ENCODE measurements at regions of chr10 and their contacts with region 1.

Region 1: GRCh38 chr10:96513698-96514561 is at the start of gene TLL2:
- DNase-seq: peak; percentile 79 to 89
- H3K4me3 ChIP-seq: peak within 1 kb of the TSS; percentile 48 to 59
- H3K27ac ChIP-seq: peak within 1 kb of the TSS in 1 of 2 donors; percentile 34
- H3K4me1 ChIP-seq: peaks cover 4 to 26% (median 19%) of the 10 kb centered on the region in 4 donors
- H3K27me3 ChIP-seq: peaks cover 0 to 9% of the 10 kb centered on the region in 2 donors
- CTCF ChIP-seq: peak; percentile 57 to 73

Region 2: GRCh38 chr10:96395931-96396877 is 117.7 kb before region 1 on chr10:
- intact Hi-C with region 1: loop called (anchors 10 kb)
- DNase-seq: peak; percentile 57 to 75
- H3K4me3 ChIP-seq: no peak overlapping the region
- H3K27ac ChIP-seq: no peak overlapping the region
- H3K4me1 ChIP-seq: peaks cover 0 to 8% (median 0%) of the 10 kb centered on the region in 4 donors
- H3K27me3 ChIP-seq: peaks cover 0 to 43% of the 10 kb centered on the region in 2 donors
- CTCF ChIP-seq: peak; percentile 73 to 76

Region 3: DNA sequence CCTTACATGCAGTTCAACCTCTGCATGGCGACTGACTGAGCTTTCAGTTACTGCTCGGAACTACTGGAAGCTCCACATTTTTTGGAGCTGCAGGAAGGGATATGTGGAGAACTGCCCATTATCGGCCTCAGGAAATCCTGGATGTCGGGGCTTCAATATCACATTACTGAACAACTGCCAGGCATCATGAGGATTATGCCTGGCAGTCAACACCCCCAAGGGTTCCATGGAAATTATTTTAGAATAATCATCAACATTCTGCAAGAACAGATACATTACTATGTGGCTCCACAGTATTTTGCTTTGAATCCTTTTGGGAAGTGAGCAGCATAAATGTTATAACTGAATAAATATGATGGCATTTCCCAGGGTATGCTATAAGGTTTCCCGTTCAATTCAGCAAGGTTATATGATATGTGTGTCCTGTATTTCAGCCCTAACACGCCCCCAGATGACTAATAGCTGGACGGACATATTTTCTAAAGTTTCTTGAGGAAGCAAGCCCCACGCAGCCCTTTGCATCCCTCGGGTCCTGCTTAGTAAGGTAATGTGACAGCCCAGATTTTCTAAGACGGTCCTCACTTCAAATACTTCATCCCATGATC is 102.1 kb before region 1 on chr10:
- intact Hi-C with region 1: no loop called
- DNase-seq: peak in 1 of 2 donors; percentile 9
- H3K4me3 ChIP-seq: no peak overlapping the region
- H3K27ac ChIP-seq: no peak overlapping the region
- H3K4me1 ChIP-seq: peaks cover 0 to 11% (median 4%) of the 10 kb centered on the region in 4 donors
- H3K27me3 ChIP-seq: peaks cover 0 to 41% of the 10 kb centered on the region in 2 donors
- CTCF ChIP-seq: no peak

Region 4: DNA sequence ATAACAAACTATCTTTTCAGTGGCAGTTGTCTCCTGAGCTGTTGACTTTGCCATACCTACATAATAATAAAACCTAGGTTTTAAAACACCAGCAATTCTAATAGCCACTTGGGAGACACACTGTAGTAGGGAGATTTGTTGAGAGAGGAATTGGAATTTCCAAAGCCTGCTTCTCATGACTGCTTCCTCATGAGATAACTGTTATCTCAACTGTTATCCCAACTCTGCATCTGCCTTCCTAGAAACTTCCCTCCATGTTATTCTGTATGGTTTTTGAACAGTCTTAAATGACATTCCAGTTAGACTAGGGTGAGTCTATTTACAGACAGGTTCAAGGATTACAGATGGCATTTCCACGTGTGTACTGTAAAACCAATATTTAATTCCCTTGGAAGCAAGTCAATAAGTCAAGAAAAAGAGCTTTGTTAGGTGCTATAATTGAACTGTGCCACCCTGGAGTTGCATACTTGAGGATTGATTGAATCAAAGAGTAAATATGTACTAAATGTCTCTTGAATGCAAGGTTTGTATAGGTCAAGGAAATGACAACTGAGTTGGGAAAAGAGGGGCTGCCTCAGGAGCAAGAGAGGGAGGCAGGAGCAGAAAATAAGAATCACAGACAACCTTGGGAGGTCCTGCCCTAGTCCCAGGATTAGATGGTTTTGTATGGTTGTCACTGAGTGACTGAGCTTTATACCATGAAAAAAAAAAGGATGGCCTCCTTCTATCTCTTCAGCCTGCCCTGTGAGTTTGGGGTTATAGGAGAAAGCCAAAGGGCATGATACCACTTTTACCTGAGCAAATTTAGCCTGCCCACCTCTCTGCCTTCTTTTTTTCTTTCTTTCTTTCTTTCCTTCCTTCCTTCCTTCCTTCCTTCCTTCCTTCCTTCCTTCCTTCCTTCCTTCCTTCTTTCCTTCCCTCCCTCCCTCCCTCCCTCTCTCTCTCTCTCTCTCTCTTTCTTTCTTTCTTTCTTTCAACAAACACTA is 82.8 kb after region 1 on chr10:
- intact Hi-C with region 1: no loop called
- DNase-seq: no peak
- H3K4me3 ChIP-seq: no peak overlapping the region
- H3K27ac ChIP-seq: no peak overlapping the region
- H3K4me1 ChIP-seq: no peaks in the 10 kb centered on the region
- H3K27me3 ChIP-seq: peaks cover 0 to 6% of the 10 kb centered on the region in 2 donors
- CTCF ChIP-seq: no peak

Region 5: DNA sequence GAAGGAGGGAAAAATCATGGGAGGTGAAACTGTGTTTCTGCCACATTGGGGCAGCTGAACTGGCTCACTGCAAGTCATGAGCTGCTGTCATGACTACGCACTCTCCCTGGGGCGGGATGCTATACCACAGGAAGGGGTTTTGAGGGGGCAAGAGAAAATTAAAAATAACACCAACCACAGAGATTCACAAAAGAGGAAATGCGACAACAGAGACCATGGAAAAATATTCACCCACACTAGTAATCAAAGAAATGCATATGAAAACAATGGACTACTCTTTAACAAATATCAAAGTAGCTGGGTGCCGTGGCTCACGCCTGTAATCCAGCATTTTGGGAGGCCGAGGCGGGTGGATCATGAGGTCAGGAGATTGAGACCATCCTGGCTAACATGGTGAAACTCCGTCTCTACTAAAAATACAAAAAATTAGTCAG is 138.1 kb after region 1 on chr10:
- intact Hi-C with region 1: no loop called
- DNase-seq: no peak
- H3K4me3 ChIP-seq: no peak overlapping the region
- H3K27ac ChIP-seq: no peak overlapping the region
- H3K4me1 ChIP-seq: no peaks in the 10 kb centered on the region
- H3K27me3 ChIP-seq: no peaks in the 10 kb centered on the region
- CTCF ChIP-seq: no peak

Measured in tibial artery (tissue), 4 donors.